ENCODE measurements at regions of chr21 and their contacts with region 1.

Region 1: DNA sequence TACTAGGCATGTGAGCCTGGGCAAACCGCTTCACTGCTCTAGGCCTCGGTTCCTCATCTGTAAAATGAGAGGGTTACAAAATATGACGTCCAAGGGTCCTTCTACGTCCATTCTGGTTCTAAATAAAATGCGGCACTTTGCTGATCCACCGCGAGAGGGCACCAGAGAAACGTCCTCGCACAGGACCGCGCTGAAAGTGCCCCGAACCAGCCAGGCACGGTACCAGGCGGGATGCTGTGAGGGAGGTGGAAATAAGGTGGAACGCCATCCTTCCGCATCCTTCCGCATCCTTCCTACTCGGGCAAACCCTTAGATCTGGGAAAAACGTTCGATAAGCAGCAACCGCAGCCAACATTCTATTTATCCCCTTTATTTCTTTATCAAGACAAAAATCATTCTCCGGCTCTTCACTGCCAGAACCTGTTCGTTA is 60.3 kb upstream of the KRTAP19-8 start:
- DNase-seq: peak; percentile 62
- H3K4me3 Mint-ChIP-seq: no peak overlapping the region
- H3K27ac Mint-ChIP-seq: no peak overlapping the region
- H3K4me1 Mint-ChIP-seq: no peaks in the 10 kb centered on the region
- H3K27me3 Mint-ChIP-seq: peaks cover 8% of the 10 kb centered on the region
- CTCF ChIP-seq: peak; percentile 70

Region 2: DNA sequence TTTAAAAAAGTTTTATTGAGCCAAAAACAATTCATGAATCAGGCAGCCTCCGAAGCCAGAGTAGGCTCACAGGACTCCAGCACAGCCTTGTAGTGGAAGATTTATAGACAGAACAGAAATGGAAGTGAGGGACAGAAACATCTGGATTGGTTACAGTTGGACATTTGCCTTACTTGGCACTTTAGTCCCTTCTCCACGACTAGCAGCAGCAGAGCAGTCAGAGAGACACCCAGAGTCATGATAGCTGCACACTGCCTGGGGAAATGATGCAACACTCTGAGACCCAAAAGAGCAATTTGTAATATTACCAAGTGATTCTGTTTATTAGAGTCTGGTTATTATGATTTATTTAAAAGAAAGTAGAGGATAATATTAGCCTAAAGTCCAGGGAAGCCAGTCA is 145.0 kb before region 1 on chr21:
- CTCF ChIA-PET with region 1: no interaction called
- intact Hi-C with region 1: no loop called
- DNase-seq: no peak
- H3K4me3 Mint-ChIP-seq: no peak overlapping the region
- H3K27ac Mint-ChIP-seq: no peak overlapping the region
- H3K4me1 Mint-ChIP-seq: no peaks in the 10 kb centered on the region
- H3K27me3 Mint-ChIP-seq: no peaks in the 10 kb centered on the region
- CTCF ChIP-seq: no peak

Region 3: DNA sequence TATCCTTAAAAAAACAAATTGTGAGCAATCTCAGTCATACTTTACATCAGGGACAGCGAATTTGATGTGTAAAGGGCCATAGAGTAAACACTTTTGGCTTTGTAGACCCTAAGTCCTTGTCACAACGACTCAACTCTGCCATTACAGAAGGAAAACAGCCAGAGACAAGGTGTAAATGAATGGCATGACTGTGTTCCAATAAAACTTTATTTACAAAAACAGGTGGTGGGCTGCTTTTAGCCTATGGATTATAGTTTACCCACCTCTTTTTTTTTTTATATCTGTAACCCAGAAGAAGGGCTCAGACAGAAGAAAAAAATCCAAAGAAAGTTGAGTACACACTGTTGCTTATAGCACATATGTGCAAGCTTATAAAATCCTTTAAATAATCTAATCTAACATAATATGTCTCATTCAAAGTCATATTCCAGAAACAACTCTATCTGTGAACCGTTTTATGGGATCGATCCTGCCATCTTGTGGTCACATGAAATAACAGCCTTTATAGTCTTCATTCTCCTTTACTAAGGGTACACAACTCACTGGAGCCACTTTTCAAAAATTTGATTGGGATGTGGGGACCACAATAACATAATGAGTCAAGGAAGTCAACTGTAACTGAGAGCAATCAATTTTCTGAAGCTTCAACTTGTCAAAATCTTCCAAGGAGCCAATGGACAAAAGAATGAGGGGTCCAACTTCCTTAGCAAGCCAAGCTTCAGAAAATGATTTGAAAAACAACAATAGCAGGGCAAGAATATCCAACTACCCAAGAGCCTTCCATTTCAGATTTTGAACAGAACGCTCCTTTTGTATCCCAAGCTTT is 81.9 kb after region 1 on chr21:
- CTCF ChIA-PET with region 1: no interaction called
- intact Hi-C with region 1: loop called (anchors 2 kb)
- DNase-seq: peak; percentile 2
- H3K4me3 Mint-ChIP-seq: no peak overlapping the region
- H3K27ac Mint-ChIP-seq: no peak overlapping the region
- H3K4me1 Mint-ChIP-seq: no peaks in the 10 kb centered on the region
- H3K27me3 Mint-ChIP-seq: no peaks in the 10 kb centered on the region
- CTCF ChIP-seq: no peak

Region 4: GRCh38 chr21:31604591-31605190 is 506.1 kb after region 1 on chr21:
- CTCF ChIA-PET with region 1: no interaction called
- intact Hi-C with region 1: loop called (anchors 1 kb)
- DNase-seq: peak; percentile 51
- H3K4me3 Mint-ChIP-seq: no peak overlapping the region
- H3K27ac Mint-ChIP-seq: no peak overlapping the region
- H3K4me1 Mint-ChIP-seq: no peaks in the 10 kb centered on the region
- H3K27me3 Mint-ChIP-seq: no peaks in the 10 kb centered on the region
- CTCF ChIP-seq: peak; percentile 65

Measured in Calu3 (cell line).